BJ (cell line): ENCODE measurements at regions of chr14 and their contacts with region 1.

Region 1: DNA sequence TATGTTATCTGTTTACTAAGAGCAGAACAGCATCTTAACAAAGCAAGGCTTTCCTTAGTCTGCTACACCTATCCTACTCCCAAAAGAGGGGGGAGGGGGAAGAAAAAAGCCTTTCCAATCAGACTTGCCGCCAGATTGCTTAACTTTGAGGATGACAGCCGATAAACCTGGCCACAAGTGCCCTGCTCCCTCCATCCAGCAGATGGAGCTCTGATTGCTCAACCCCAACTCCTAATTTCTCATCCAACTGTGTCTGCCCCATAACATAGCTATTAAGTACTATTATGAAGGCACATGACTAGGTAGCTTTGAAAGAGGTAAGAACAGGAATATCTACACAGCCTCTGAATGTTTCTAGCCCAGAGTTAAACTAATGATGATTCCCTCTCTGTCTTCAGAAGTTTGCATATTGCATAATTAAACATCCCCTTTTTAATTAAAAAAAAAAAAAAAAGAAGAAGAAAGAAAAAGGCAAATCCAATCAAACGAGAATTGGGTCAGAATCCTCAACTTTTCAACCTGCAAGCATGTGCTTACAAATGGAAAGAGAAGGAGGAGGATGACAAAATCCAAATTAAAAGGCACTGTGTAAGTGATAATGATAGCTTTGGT is 247.4 kb downstream of the GALC start:
- DNase-seq: no peak
- H3K4me3 ChIP-seq: no peak overlapping the region
- H3K27me3 ChIP-seq: no peaks in the 10 kb centered on the region
- CTCF ChIP-seq: peak; percentile 76

Region 2: GRCh38 chr14:86248902-86249301 is 1496.7 kb before region 1 on chr14:
- CTCF ChIA-PET with region 1: no interaction called
- POLR2A ChIA-PET with region 1: no interaction called
- DNase-seq: no peak
- H3K4me3 ChIP-seq: no peak overlapping the region
- H3K27me3 ChIP-seq: no peaks in the 10 kb centered on the region
- CTCF ChIP-seq: no peak

Region 3: GRCh38 chr14:87691042-87691881 is 54.4 kb before region 1 on chr14:
- CTCF ChIA-PET with region 1: no interaction called
- POLR2A ChIA-PET with region 1: no interaction called
- DNase-seq: no peak
- H3K4me3 ChIP-seq: no peak overlapping the region
- H3K27me3 ChIP-seq: no peaks in the 10 kb centered on the region
- CTCF ChIP-seq: no peak

Region 4: DNA sequence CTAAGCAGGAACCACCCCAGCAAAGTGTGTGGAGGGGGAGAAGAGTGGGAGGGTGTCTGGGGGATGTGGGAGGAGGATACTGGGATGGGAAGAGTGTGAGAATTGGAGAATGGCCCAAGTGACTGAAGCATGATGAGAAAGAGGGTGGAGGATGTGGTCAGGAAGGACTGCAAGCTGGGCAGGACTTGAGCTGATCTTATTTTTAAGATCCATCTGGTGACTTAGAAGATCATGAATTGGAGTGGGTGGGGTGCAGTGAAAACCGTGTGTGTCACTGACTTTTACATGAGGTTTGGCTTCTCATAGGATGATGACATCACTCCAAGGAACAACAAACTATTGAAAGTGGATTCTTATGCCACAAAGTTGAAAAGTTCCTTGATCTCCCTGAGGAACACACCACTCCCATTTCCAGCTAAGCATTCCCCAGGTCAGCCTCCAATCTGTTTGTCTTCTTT is 40.1 kb before region 1 on chr14:
- CTCF ChIA-PET with region 1: no interaction called
- POLR2A ChIA-PET with region 1: no interaction called
- DNase-seq: no peak
- H3K4me3 ChIP-seq: no peak overlapping the region
- H3K27me3 ChIP-seq: no peaks in the 10 kb centered on the region
- CTCF ChIP-seq: no peak

Region 5: GRCh38 chr14:87732562-87732961 is 13.1 kb before region 1 on chr14:
- CTCF ChIA-PET with region 1: interaction called, 11 read pairs
- POLR2A ChIA-PET with region 1: no interaction called
- DNase-seq: no peak
- H3K4me3 ChIP-seq: no peak overlapping the region
- H3K27me3 ChIP-seq: no peaks in the 10 kb centered on the region
- CTCF ChIP-seq: no peak